Psoas muscle (tissue), 8 donors: ENCODE measurements at regions of chr17 and their contacts with region 1.

Region 1: DNA sequence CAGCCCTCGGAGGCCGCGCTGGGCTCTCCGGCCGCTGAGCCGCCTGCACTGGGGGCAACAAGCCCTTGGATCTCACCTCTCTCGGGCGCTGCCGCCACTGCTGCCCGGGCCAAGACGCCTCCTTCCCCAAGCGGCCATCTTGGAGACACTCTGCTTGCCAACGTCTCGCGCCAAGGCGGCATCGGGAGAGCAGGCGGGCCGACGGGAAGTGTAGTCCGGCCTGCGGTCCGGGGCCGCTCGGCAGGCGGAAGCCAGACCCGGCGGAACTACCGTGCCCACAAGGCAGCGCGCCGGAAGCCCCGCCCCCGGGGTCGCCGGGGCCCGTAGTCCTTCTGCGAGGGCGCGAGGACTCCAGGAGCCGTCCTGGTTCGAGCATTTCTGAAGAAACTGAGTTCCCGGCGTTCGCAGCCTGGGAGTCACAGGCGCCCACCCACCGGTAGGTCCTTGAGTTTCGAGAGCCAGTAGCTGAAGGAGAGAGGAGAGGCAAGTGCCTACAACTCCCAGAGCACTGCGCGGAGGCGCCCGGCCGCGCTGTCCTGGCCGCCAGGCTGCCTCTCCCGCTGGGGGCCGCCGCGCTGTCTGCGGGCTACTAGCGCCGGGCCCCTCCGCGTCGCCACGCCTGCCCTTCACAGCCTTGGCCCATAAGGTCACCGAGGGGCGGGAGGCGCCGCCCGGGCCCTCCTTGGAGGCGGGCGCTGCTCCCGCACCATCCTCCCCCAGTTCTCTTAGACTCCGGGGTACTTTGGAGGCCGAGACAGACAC is at the start of gene TMEM11:
- DNase-seq: peak; percentile 97 to 99
- ATAC-seq: peak; percentile 84 to 92 (median 86)
- H3K4me3 ChIP-seq: peak within 1 kb of the TSS; percentile 97
- H3K27ac ChIP-seq: peak within 1 kb of the TSS; percentile 99
- H3K4me1 ChIP-seq: peaks cover 67% of the 10 kb centered on the region
- H3K27me3 ChIP-seq: no peaks in the 10 kb centered on the region
- CTCF ChIP-seq: no peak
- total RNA-seq, gene TMEM11: 52.9 to 78.4 (median 58.6) TPM

Region 2: DNA sequence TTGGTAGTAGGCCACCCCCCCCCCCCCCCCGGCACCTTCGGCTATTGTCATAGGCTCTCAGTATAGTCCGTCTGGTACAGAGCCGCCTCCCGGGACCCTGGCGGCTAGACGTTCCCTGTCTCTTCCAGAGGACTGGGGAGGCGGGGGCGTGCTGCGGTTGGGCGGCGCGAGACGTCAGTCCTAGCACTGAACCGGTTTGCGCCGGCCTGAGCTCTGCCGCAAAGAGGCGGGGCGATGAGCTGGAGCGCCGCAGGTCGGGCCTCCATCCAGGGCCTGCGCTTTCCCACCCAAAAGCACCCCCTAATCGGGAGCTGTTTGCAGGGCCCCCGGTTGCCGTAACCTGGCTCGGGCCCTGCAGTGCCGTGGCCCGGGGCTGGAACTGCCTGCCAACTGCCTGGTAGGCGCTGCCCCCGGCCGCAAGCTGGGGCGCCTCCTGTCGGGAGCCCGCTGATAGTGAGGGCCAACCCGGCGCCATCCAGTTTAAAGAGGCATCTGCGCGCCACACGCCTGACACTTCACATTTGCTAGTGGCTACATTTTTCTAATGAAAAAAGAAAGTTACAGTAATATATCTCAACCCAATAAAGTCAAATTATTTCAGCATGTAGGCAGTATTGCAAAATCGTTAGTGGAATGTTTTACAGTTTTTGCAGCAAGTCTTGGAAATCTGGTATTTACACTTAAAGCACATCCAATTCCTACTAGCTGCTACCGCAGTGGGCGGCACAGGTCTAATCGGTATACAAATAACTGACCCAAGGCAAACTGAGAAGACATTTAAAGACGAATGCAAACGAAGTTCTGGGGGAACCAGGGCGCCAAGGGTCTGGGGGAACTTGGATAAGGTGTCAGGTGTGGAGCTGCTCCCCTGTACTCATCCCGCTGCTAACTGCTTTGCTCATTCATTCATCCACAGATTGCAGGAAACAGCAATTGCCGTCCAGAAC is 170.6 kb before region 1 on chr17:
- intact Hi-C with region 1: loop called in 1 of 2 experiments (anchors 5 kb)
- DNase-seq: peak; percentile 99 to 100
- ATAC-seq: peak; percentile 89 to 94 (median 90)
- H3K4me3 ChIP-seq: peak overlapping the region; percentile 80
- H3K27ac ChIP-seq: peak overlapping the region; percentile 99
- H3K4me1 ChIP-seq: peaks cover 23% of the 10 kb centered on the region
- H3K27me3 ChIP-seq: no peaks in the 10 kb centered on the region
- CTCF ChIP-seq: peak; percentile 92

Region 3: DNA sequence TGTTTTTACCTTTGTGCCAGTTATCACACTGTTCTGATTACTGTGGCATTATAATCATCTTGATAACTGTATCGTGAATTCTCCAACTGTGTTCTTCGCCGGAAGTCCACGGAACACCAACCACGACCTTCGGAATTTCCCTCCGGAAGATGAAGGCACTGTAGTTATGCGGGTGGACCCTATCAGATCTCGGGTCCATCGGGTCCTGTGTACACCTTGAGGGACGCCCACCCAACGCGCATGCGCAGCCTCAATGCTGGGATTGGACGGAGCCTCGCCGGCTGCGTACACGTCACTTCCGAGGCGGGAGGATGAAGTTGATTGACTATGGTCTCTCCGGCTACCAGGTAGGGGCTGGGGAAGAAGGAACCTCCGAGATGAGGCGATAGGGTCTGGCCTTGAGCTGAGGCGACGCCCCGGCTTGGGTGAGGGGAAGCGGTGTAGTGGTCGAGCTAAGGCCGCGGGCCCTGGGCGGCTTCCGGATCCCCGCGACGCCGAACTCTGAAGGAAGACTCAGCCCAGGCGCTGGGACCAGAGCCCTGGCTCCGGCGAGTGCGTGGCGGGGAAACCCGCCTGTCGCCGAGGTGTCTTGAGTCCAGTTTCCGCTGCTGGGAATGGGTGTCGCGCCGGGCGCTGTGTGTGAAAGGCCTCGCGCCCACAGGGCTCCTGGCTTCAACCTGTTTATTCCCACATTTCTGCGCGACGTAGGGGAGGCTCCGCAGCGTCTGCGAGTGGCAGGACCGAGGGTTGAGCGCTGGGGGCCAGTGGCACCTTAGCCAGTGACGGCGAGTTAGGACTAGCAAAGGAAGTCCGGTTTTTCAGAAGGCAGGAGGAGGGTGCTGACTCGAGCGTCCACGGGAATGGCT is 87.3 kb before region 1 on chr17 and contains the start of gene DHRS7B:
- intact Hi-C with region 1: loop called (anchors 5 kb)
- DNase-seq: peak; percentile 95 to 98
- ATAC-seq: peak; percentile 93 to 96 (median 95)
- H3K4me3 ChIP-seq: peak within 1 kb of the TSS; percentile 93
- H3K27ac ChIP-seq: peak within 1 kb of the TSS; percentile 98
- H3K4me1 ChIP-seq: peaks cover 37% of the 10 kb centered on the region
- H3K27me3 ChIP-seq: no peaks in the 10 kb centered on the region
- CTCF ChIP-seq: no peak
- total RNA-seq, gene DHRS7B: 15.7 to 50.1 (median 37.7) TPM

Region 4: DNA sequence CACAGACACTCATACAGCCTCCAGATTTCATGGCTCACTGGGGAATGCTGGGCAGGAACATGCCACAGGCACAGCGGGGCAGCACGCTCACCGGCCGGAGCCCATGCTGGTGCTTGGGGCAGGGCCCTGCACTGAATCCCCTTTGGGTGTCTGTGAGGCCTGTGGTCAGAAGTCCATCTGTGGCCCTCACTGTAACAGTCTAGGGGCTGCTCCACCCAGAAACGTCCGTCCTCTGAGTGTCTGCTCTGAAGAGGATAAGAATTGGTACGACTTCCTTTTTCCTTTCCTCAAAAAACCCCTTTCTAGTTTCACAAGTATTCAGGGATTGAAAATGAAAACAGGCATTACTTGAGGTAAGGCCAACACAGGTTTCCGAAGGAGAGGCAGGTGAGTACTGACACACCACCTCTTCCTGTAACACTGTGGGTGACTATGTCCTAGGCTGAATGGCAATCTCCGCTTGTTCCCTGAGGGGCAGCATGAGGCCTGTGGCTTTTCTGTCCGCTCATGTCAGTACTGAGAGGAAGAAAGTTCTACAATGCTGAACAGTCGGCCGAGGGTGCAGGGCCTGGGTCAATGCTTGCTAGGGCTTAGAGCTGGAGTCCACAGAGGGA is 42.8 kb before region 1 on chr17:
- intact Hi-C with region 1: loop called (anchors 2 to 5 kb)
- DNase-seq: no peak
- ATAC-seq: no peak
- H3K4me3 ChIP-seq: no peak overlapping the region
- H3K27ac ChIP-seq: peak overlapping the region; percentile 96
- H3K4me1 ChIP-seq: peaks cover 78% of the 10 kb centered on the region
- H3K27me3 ChIP-seq: no peaks in the 10 kb centered on the region
- CTCF ChIP-seq: no peak

Region 5: DNA sequence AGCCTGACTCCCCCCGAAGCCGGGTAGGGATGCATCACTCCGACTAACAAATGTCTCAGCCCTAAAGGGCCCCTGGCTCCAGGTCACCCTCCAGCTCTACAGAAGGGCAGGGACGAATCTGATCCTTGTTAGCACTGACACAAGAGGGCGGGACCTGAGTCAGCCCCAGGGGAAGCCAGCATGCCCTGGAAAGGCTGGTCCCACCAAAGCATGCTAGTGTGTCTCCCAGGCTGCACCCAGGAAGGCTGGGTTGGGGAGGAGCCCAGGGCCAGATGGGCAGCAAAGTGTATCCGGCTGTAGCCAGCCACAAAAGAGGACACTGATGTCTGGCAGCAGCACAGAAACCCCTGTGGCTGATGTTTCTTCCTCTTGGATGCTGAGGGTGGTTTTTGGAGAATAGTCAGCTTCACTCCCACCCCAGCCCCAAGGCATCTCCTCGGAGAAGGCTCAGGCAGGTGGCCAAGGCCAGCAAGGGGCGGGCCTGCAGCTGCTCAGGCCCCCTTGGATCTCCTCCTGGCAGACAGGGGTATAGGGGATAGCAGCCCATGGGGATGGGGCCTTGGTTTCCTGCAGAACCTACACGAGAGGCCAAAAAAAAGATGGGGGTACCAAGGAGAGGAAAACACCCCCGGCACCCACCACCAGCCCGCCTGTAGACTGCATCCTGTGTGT is 28.0 kb after region 1 on chr17:
- intact Hi-C with region 1: loop called in 1 of 2 experiments (anchors 2 kb)
- DNase-seq: peak in 1 of 2 donors; percentile 75
- ATAC-seq: peak; percentile 10 to 51 (median 26)
- H3K4me3 ChIP-seq: peak overlapping the region; percentile 34
- H3K27ac ChIP-seq: peak overlapping the region; percentile 94
- H3K4me1 ChIP-seq: peaks cover 65% of the 10 kb centered on the region
- H3K27me3 ChIP-seq: no peaks in the 10 kb centered on the region
- CTCF ChIP-seq: no peak

Region 6: GRCh38 chr17:21275579-21276263 is 61.5 kb after region 1 on chr17:
- intact Hi-C with region 1: loop called in 1 of 2 experiments (anchors 5 kb)
- DNase-seq: peak; percentile 94 to 97
- ATAC-seq: peak; percentile 89 to 94 (median 92)
- H3K4me3 ChIP-seq: peak overlapping the region; percentile 74
- H3K27ac ChIP-seq: peak overlapping the region; percentile 81
- H3K4me1 ChIP-seq: peaks cover 45% of the 10 kb centered on the region
- H3K27me3 ChIP-seq: no peaks in the 10 kb centered on the region
- CTCF ChIP-seq: no peak